Caco-2 (cell line): ENCODE measurements at regions of chr2 and their contacts with region 1.

Region 1: DNA sequence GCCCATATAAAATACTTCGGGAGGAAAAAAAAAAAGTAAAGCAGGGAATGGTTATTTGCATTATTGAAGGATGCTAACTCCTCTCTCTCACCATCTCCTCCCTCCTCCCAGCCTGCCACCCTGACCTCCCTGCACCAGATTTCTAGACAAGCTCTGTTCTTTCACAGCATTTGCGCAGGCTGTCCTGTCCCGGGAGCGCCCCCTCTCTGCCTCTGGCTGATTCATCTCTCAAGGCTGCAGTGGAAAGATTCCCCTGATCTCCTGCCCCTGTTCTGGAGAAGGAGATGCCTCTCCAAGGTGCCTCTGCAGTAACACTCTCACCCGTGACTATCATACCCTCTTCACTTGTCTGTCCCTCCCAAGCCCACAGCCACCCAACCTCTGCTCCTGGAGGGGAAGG is 38.5 kb downstream of the COL4A4 start:
- DNase-seq: peak; percentile 25 to 41
- H3K4me3 ChIP-seq: no peak overlapping the region
- H3K4me3 Mint-ChIP-seq: no peak overlapping the region
- H3K27ac Mint-ChIP-seq: peak overlapping the region; percentile 62
- H3K4me1 ChIP-seq: peaks cover 15% of the 10 kb centered on the region
- H3K4me1 Mint-ChIP-seq: peaks cover 29% of the 10 kb centered on the region
- H3K27me3 ChIP-seq: no peaks in the 10 kb centered on the region
- H3K27me3 Mint-ChIP-seq: no peaks in the 10 kb centered on the region
- CTCF ChIP-seq: peak in 1 of 2 experiments; percentile 8

Region 2: GRCh38 chr2:227310751-227311100 is 185.2 kb after region 1 on chr2:
- CTCF ChIA-PET with region 1: no interaction called
- POLR2A ChIA-PET with region 1: no interaction called
- intact Hi-C with region 1: loop called (anchors 5 kb)
- DNase-seq: no peak
- H3K4me3 ChIP-seq: no peak overlapping the region
- H3K4me3 Mint-ChIP-seq: no peak overlapping the region
- H3K27ac Mint-ChIP-seq: peak overlapping the region; percentile 71
- H3K4me1 ChIP-seq: peaks cover 62% of the 10 kb centered on the region
- H3K4me1 Mint-ChIP-seq: peaks cover 20% of the 10 kb centered on the region
- H3K27me3 ChIP-seq: no peaks in the 10 kb centered on the region
- H3K27me3 Mint-ChIP-seq: no peaks in the 10 kb centered on the region
- CTCF ChIP-seq: no peak